A549 (cell line): ENCODE measurements at regions of chr12 and their contacts with region 1.

Region 1: DNA sequence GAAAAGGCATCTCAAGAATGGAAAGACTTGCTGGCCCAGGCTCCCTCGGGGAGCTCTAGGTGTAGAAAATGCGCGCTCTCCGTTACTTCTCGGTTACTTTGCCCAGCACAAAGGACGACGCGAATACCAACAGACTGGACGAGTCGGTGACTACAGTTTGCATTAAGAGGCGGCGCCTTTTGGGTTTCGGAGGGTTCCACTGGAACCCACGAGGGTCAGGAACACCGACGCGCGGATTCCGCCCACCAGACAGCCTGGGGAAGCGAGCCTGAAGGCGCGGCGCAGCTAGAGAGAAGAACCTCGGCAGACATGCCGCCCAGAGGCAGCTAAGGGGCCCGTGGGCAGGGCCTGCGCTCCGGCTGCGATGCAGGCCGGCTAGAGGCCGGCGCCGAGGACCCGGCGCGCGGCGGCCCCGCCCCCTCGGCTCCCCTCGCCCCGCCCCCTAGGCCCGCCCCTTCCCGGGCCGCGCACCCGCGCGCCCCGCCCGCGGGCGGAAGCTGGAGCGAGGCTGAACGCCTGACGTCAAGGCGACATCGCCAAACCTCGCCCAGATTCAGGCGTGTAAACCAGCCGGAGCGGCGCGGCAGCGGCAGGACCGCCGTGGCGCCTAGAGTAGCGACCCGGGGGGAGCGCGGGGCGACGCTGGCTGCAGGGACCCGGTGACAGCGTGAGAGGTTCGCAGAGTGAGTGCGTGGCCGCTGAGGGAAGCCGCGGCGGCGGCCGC is at the start of gene RAP1B:
- DNase-seq: peak; percentile 70 to 91
- ATAC-seq: peak; percentile 95 to 96
- H3K4me3 ChIP-seq: peak within 1 kb of the TSS; percentile 93
- H3K27ac ChIP-seq: peak within 1 kb of the TSS; percentile 85 to 90
- H3K4me1 ChIP-seq: peaks cover 37% of the 10 kb centered on the region
- CTCF ChIP-seq: no peak
- EP300 ChIP-seq: no peak
- POLR2A ChIP-seq: peak; percentile 89
- RAD21 ChIP-seq: peak; percentile 6 to 30; a peak in 1 of 5 replicates
- polyA plus RNA-seq, gene RAP1B: 226 and 305 TPM in 2 replicates

Region 2: GRCh38 chr12:68364893-68365725 is 245.4 kb before region 1 on chr12:
- CTCF ChIA-PET with region 1: interaction called, 16 read pairs
- POLR2A ChIA-PET with region 1: interaction called, 21 read pairs
- DNase-seq: peak; percentile 96
- ATAC-seq: peak; percentile 99
- H3K4me3 ChIP-seq: peak overlapping the region; percentile 33
- H3K27ac ChIP-seq: peak overlapping the region; percentile 86 to 88
- H3K4me1 ChIP-seq: peaks cover 25% of the 10 kb centered on the region
- CTCF ChIP-seq: no peak
- EP300 ChIP-seq: no peak
- POLR2A ChIP-seq: peak; percentile 88
- RAD21 ChIP-seq: peak in 1 of 2 experiments; percentile 39; a peak in 3 of 5 replicates

Region 3: DNA sequence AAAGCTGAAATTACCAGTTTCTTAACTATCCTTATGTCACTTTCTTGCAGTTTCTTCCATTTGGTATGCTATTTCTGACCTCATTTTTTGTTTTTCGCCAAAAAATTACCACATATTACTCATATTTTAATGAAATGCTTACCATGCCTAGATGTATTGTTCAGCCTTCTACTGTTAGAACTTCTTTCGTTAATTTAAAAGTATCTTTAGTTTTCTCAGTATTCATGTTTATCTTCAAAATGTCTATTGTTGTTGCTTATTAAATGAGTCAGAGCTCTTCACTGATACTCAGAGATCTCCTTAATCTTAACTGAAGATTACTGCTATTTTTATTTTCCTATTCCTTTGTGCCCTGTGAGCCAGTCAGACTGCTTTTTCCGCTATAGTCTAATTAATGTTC is 20.7 kb after region 1 on chr12:
- CTCF ChIA-PET with region 1: no interaction called
- POLR2A ChIA-PET with region 1: no interaction called
- DNase-seq: no peak
- ATAC-seq: no peak
- H3K4me3 ChIP-seq: no peak overlapping the region
- H3K27ac ChIP-seq: no peak overlapping the region
- H3K4me1 ChIP-seq: peaks cover 14% of the 10 kb centered on the region
- CTCF ChIP-seq: no peak
- EP300 ChIP-seq: no peak
- POLR2A ChIP-seq: no peak
- RAD21 ChIP-seq: no peak